IMR-90 (cell line): ENCODE measurements at regions of chr1 and their contacts with region 1.

Region 1: DNA sequence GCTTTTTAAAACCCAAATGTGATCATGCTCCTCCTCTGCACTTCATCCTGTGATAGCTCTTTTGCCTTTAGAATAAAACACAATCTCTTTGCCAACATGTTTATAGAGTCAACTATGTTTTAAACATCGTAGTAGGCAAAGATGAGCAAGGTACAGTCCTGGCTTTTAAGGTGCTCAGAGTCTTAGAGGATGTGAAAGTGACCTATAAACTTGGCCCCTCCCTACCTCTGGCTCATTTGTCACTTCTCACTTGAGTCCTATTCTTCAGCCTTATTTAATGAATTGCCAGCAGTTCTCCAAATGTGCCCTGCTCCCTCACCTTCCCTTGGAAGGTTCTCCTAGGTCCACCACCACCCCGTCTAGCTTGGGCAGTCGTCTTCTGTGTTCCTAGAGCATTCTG is 617.0 kb upstream of the NR5A2 start:
- DNase-seq: no peak
- ATAC-seq: no peak
- H3K4me3 ChIP-seq: no peak overlapping the region
- H3K27ac ChIP-seq: no peak overlapping the region
- H3K4me1 ChIP-seq: no peaks in the 10 kb centered on the region
- H3K27me3 ChIP-seq: no peaks in the 10 kb centered on the region
- CTCF ChIP-seq: no peak
- POLR2A ChIP-seq: no peak
- RAD21 ChIP-seq: no peak

Region 2: GRCh38 chr1:198713081-198713480 is 697.4 kb before region 1 on chr1:
- CTCF ChIA-PET with region 1: no interaction called
- POLR2A ChIA-PET with region 1: no interaction called
- dilution Hi-C with region 1: no loop called
- in situ Hi-C with region 1: no loop called
- intact Hi-C with region 1: no loop called
- DNase-seq: peak; percentile 69
- ATAC-seq: peak; percentile 92
- H3K4me3 ChIP-seq: no peak overlapping the region
- H3K27ac ChIP-seq: no peak overlapping the region
- H3K4me1 ChIP-seq: no peaks in the 10 kb centered on the region; the same call in 1 of the 2 replicates
- H3K27me3 ChIP-seq: no peaks in the 10 kb centered on the region
- CTCF ChIP-seq: no peak
- POLR2A ChIP-seq: no peak
- RAD21 ChIP-seq: no peak

Region 3: GRCh38 chr1:199123615-199124014 is 286.8 kb before region 1 on chr1:
- CTCF ChIA-PET with region 1: no interaction called
- POLR2A ChIA-PET with region 1: no interaction called
- dilution Hi-C with region 1: no loop called
- in situ Hi-C with region 1: no loop called
- intact Hi-C with region 1: loop called (anchors 10 kb)
- DNase-seq: peak; percentile 85
- ATAC-seq: peak; percentile 94
- H3K4me3 ChIP-seq: no peak overlapping the region
- H3K27ac ChIP-seq: no peak overlapping the region
- H3K4me1 ChIP-seq: peaks cover 4% of the 10 kb centered on the region; the same call in 1 of the 2 replicates
- H3K27me3 ChIP-seq: no peaks in the 10 kb centered on the region
- CTCF ChIP-seq: no peak
- POLR2A ChIP-seq: no peak
- RAD21 ChIP-seq: no peak

Region 4: GRCh38 chr1:199383791-199384190 is 26.7 kb before region 1 on chr1:
- CTCF ChIA-PET with region 1: no interaction called
- POLR2A ChIA-PET with region 1: no interaction called
- dilution Hi-C with region 1: no loop called
- in situ Hi-C with region 1: no loop called
- intact Hi-C with region 1: no loop called
- DNase-seq: no peak
- ATAC-seq: no peak
- H3K4me3 ChIP-seq: no peak overlapping the region
- H3K27ac ChIP-seq: no peak overlapping the region
- H3K4me1 ChIP-seq: no peaks in the 10 kb centered on the region
- H3K27me3 ChIP-seq: no peaks in the 10 kb centered on the region
- CTCF ChIP-seq: no peak
- POLR2A ChIP-seq: no peak
- RAD21 ChIP-seq: no peak

Region 5: DNA sequence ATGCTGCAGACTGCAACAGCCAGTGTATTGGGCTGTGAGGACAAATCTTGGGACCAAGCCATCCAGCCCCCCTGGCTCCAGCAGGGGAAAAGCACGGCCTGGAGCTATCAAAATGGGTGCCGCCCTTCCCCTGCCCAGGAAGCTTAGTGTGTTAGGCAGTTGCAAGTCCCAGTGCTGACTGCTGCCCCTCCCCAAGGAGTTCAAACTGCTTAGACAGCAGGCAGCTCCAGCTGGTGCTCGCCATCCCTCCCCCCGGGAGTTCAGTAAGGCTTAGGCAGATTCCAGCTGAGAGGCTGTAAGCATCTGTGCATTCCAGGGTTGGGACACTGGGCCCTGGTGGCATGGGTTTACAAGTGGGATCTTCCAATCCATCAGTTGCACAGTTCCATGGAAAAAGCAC is 37.4 kb after region 1 on chr1:
- CTCF ChIA-PET with region 1: no interaction called
- POLR2A ChIA-PET with region 1: no interaction called
- dilution Hi-C with region 1: no loop called
- in situ Hi-C with region 1: no loop called
- intact Hi-C with region 1: no loop called
- DNase-seq: no peak
- ATAC-seq: 0 out of 2 replicates have a peak, but pooled peaks have one; percentile 37
- H3K4me3 ChIP-seq: no peak overlapping the region
- H3K27ac ChIP-seq: no peak overlapping the region
- H3K4me1 ChIP-seq: no peaks in the 10 kb centered on the region; the same call in 1 of the 2 replicates
- H3K27me3 ChIP-seq: no peaks in the 10 kb centered on the region
- CTCF ChIP-seq: no peak
- POLR2A ChIP-seq: no peak
- RAD21 ChIP-seq: no peak